ENCODE measurements at regions of chr4 and their contacts with region 1.

Region 1: DNA sequence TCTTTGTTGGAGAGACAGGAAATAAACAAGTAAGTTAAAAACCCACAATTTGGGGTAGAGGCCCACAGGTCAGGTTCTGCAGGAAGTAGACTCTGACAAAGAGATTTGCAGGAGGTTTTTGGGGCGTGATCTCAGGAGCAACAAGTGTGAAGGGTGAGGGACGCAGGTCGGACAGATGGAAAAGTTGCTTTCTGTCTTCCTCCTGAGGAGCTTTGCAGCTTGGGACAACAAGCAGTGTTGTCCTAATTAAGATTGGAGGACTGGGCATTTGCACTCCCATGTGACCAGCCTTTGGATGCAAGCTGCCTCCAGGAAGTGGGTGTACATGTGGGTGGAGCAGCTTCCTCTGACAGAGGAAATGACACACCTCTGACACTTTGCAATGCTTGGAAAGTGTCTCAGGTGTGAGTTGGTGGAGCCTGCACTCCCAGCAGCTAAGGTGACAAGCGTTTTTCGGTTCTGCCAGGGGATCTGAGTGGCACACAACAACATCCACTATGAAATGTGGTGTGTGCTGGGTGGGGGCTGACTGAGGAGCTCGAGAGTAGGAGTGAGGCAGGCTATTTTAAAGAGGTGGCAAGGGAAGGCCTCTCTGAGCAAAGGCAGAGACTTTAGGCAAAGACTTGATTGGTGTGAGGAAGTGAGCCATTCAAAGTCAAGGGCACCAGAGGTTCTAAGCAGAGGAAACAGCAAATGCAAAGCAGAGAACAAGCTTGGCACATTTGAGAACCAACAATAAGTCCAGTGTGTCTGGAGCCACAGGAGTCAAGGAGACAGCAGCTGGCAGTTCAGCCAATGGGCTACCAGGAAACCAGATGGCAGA is 339.8 kb upstream of the GATB start:
- DNase-seq: peak; percentile 40 to 96 (median 95)
- ATAC-seq: peak; percentile 90
- H3K4me3 ChIP-seq: peak overlapping the region; percentile 58
- H3K4me3 Mint-ChIP-seq: peak overlapping the region; percentile 72 to 98 (median 87)
- H3K27ac ChIP-seq: peak overlapping the region; percentile 89
- H3K27ac Mint-ChIP-seq: peak overlapping the region; percentile 95 to 99 (median 98)
- H3K4me1 ChIP-seq: peaks cover 93 to 94% of the 10 kb centered on the region in 2 donors
- H3K4me1 Mint-ChIP-seq: peaks cover 62 to 96% (median 92%) of the 10 kb centered on the region in 7 donors
- H3K27me3 ChIP-seq: no peaks in the 10 kb centered on the region
- H3K27me3 Mint-ChIP-seq: no peaks in the 10 kb centered on the region

Region 2: DNA sequence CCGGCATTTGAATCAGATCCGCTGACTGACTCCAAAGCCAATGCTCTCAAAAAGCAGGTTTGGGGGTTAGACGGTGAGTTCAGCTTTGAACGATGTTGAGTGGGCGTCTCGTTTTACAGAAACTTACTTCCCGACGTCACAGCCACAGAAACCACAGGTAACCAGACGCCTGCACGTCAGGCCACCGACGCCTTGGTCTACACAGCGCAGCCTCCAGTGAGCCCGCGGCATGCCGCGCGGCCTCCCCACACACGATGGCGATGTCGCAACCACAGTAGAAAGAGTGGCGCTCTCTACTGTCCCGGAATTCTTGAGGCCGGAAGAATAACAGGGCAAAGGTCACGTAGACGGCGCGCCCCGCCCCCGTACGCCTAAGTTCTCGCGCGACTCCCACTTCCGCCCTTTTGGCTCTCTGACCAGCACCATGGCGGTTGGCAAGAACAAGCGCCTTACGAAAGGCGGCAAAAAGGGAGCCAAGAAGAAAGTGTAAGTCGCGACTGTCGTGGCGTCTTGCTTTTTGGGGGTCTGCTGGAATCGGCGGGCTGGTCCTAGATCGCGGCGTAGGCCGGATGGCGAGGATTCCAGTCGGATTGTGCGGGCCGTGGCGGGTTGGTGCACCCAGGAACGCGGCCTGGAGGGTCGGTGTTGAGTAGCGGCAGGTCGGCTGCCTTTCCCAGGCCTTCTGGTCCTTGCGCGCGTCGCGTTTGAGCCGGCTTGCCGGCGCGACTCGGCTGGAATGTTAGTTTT is 1001.2 kb before region 1 on chr4 and contains the start of gene RPS3A:
- CTCF ChIA-PET with region 1: no interaction called
- POLR2A ChIA-PET with region 1: no interaction called
- intact Hi-C with region 1: loop called (anchors 2 to 5 kb)
- DNase-seq: peak; percentile 95 to 100 (median 99)
- ATAC-seq: peak; percentile 97
- H3K4me3 ChIP-seq: peak within 1 kb of the TSS; percentile 96
- H3K4me3 Mint-ChIP-seq: peak within 1 kb of the TSS; percentile 89 to 99 (median 96)
- H3K27ac ChIP-seq: peak within 1 kb of the TSS; percentile 89
- H3K27ac Mint-ChIP-seq: peak within 1 kb of the TSS; percentile 97 to 99 (median 98)
- H3K4me1 ChIP-seq: peaks cover 14 to 18% of the 10 kb centered on the region in 2 donors
- H3K4me1 Mint-ChIP-seq: peaks cover 24 to 43% (median 28%) of the 10 kb centered on the region in 7 donors
- H3K27me3 ChIP-seq: no peaks in the 10 kb centered on the region
- H3K27me3 Mint-ChIP-seq: peaks cover 0 to 4% (median 0%) of the 10 kb centered on the region in 5 donors
- total RNA-seq, gene RPS3A: 1,723 to 5,358 (median 3,483) TPM

Region 3: DNA sequence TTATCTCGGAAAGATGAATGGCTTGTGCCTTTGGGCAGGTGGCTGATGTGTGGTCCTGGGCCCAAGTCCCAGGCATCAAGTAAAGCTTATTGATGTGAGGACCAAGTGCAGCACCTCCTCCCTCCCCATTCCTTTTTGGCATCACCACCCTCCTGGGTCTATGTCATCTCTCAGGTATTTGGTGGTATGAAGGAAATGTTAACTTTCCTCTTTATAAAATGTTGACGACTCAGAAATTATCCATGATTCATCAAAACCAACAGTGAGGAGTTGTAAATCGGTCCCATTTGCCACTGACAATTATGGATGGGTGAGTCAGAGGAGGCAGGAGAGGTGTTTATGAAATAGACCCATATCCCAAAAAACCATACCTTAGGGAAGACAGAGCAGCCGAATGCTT is 110.4 kb before region 1 on chr4:
- CTCF ChIA-PET with region 1: interaction called, 3 read pairs
- POLR2A ChIA-PET with region 1: interaction called, 9 read pairs
- intact Hi-C with region 1: loop called in 1 of 2 experiments (anchors 5 kb)
- DNase-seq: no peak
- ATAC-seq: no peak
- H3K4me3 ChIP-seq: no peak overlapping the region
- H3K4me3 Mint-ChIP-seq: peak overlapping the region in 4 of 10 donors; percentile 18 to 84 (median 76)
- H3K27ac ChIP-seq: no peak overlapping the region
- H3K27ac Mint-ChIP-seq: peak overlapping the region; percentile 77 to 92 (median 90)
- H3K4me1 ChIP-seq: peaks cover 48 to 51% of the 10 kb centered on the region in 2 donors
- H3K4me1 Mint-ChIP-seq: peaks cover 38 to 64% (median 56%) of the 10 kb centered on the region in 7 donors
- H3K27me3 ChIP-seq: no peaks in the 10 kb centered on the region
- H3K27me3 Mint-ChIP-seq: peaks cover 0 to 2% (median 0%) of the 10 kb centered on the region in 5 donors

Region 4: DNA sequence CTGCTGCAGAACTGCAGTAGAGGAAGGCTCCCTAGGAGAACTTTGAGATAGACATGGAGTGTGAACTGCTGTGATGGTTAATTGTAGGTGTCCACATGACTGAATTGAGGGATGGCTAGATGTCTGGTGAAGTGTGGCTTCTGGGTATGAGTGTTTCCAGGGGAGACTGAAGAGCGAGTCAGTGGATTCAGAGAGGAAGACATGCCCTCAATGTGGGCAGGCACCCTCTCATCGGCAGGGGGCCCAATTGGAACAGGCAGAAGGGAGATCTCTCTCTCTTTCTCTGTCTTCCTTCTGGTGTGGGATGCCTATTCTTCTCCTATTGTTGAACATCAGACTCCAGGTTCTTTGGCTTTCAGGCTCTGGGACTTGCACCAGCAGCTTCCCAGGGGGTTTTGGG is 35.0 kb before region 1 on chr4:
- CTCF ChIA-PET with region 1: interaction called, 4 read pairs
- POLR2A ChIA-PET with region 1: interaction called, 7 read pairs
- intact Hi-C with region 1: loop called in 1 of 2 experiments (anchors 1 kb)
- DNase-seq: peak in 5 of 9 donors; percentile 6 to 36 (median 22)
- ATAC-seq: no peak
- H3K4me3 ChIP-seq: no peak overlapping the region
- H3K4me3 Mint-ChIP-seq: peak overlapping the region in 1 of 10 donors; percentile 1
- H3K27ac ChIP-seq: no peak overlapping the region
- H3K27ac Mint-ChIP-seq: peak overlapping the region in 3 of 9 donors; percentile 12 to 40 (median 28)
- H3K4me1 ChIP-seq: peaks cover 4 to 18% of the 10 kb centered on the region in 2 donors
- H3K4me1 Mint-ChIP-seq: peaks cover 18 to 70% (median 53%) of the 10 kb centered on the region in 7 donors
- H3K27me3 ChIP-seq: no peaks in the 10 kb centered on the region
- H3K27me3 Mint-ChIP-seq: no peaks in the 10 kb centered on the region

Region 5: GRCh38 chr4:152126238-152126637 is 25.6 kb after region 1 on chr4:
- CTCF ChIA-PET with region 1: no interaction called
- POLR2A ChIA-PET with region 1: interaction called, 19 read pairs
- intact Hi-C with region 1: no loop called
- DNase-seq: peak in 2 of 9 donors; percentile 27 to 32
- ATAC-seq: no peak
- H3K4me3 ChIP-seq: no peak overlapping the region
- H3K4me3 Mint-ChIP-seq: peak overlapping the region in 4 of 10 donors; percentile 1 to 36 (median 18)
- H3K27ac ChIP-seq: no peak overlapping the region
- H3K27ac Mint-ChIP-seq: peak overlapping the region in 7 of 9 donors; percentile 0 to 52 (median 33)
- H3K4me1 ChIP-seq: no peaks in the 10 kb centered on the region
- H3K4me1 Mint-ChIP-seq: peaks cover 6 to 38% (median 29%) of the 10 kb centered on the region in 7 donors
- H3K27me3 ChIP-seq: no peaks in the 10 kb centered on the region
- H3K27me3 Mint-ChIP-seq: peaks cover 0 to 8% (median 0%) of the 10 kb centered on the region in 5 donors

Region 6: GRCh38 chr4:152247271-152247975 is 146.8 kb after region 1 on chr4:
- CTCF ChIA-PET with region 1: interaction called, 4 read pairs
- POLR2A ChIA-PET with region 1: interaction called, 11 read pairs
- intact Hi-C with region 1: loop called in 1 of 2 experiments (anchors 2 kb)
- DNase-seq: no peak
- ATAC-seq: no peak
- H3K4me3 ChIP-seq: no peak overlapping the region
- H3K4me3 Mint-ChIP-seq: peak overlapping the region in 4 of 10 donors; percentile 20 to 82 (median 62)
- H3K27ac ChIP-seq: no peak overlapping the region
- H3K27ac Mint-ChIP-seq: peak overlapping the region in 5 of 9 donors; percentile 81 to 96 (median 91)
- H3K4me1 ChIP-seq: peaks cover 10 to 35% of the 10 kb centered on the region in 2 donors
- H3K4me1 Mint-ChIP-seq: peaks cover 24 to 61% (median 48%) of the 10 kb centered on the region in 7 donors
- H3K27me3 ChIP-seq: no peaks in the 10 kb centered on the region
- H3K27me3 Mint-ChIP-seq: peaks cover 0 to 13% (median 0%) of the 10 kb centered on the region in 5 donors

Region 7: GRCh38 chr4:152436384-152436783 is 335.8 kb after region 1 on chr4:
- CTCF ChIA-PET with region 1: no interaction called
- POLR2A ChIA-PET with region 1: no interaction called
- intact Hi-C with region 1: no loop called
- DNase-seq: no peak
- ATAC-seq: no peak
- H3K4me3 ChIP-seq: no peak overlapping the region
- H3K4me3 Mint-ChIP-seq: no peak overlapping the region
- H3K27ac ChIP-seq: no peak overlapping the region
- H3K27ac Mint-ChIP-seq: no peak overlapping the region
- H3K4me1 ChIP-seq: no peaks in the 10 kb centered on the region
- H3K4me1 Mint-ChIP-seq: peaks cover 15 to 49% (median 33%) of the 10 kb centered on the region in 7 donors
- H3K27me3 ChIP-seq: no peaks in the 10 kb centered on the region
- H3K27me3 Mint-ChIP-seq: no peaks in the 10 kb centered on the region

Region 8: GRCh38 chr4:152485726-152486276 is 385.2 kb after region 1 on chr4:
- CTCF ChIA-PET with region 1: no interaction called
- POLR2A ChIA-PET with region 1: no interaction called
- intact Hi-C with region 1: loop called in 1 of 2 experiments (anchors 1 kb)
- DNase-seq: peak in 7 of 9 donors; percentile 10 to 49 (median 35)
- ATAC-seq: peak; percentile 97
- H3K4me3 ChIP-seq: no peak overlapping the region
- H3K4me3 Mint-ChIP-seq: peak overlapping the region in 2 of 10 donors; percentile 10 to 74
- H3K27ac ChIP-seq: no peak overlapping the region
- H3K27ac Mint-ChIP-seq: peak overlapping the region in 3 of 9 donors; percentile 30 to 79 (median 40)
- H3K4me1 ChIP-seq: peaks cover 0 to 13% of the 10 kb centered on the region in 2 donors
- H3K4me1 Mint-ChIP-seq: peaks cover 30 to 56% (median 45%) of the 10 kb centered on the region in 7 donors
- H3K27me3 ChIP-seq: no peaks in the 10 kb centered on the region
- H3K27me3 Mint-ChIP-seq: no peaks in the 10 kb centered on the region